ENCODE measurements at regions of chr14 and their contacts with region 1.

Region 1: DNA sequence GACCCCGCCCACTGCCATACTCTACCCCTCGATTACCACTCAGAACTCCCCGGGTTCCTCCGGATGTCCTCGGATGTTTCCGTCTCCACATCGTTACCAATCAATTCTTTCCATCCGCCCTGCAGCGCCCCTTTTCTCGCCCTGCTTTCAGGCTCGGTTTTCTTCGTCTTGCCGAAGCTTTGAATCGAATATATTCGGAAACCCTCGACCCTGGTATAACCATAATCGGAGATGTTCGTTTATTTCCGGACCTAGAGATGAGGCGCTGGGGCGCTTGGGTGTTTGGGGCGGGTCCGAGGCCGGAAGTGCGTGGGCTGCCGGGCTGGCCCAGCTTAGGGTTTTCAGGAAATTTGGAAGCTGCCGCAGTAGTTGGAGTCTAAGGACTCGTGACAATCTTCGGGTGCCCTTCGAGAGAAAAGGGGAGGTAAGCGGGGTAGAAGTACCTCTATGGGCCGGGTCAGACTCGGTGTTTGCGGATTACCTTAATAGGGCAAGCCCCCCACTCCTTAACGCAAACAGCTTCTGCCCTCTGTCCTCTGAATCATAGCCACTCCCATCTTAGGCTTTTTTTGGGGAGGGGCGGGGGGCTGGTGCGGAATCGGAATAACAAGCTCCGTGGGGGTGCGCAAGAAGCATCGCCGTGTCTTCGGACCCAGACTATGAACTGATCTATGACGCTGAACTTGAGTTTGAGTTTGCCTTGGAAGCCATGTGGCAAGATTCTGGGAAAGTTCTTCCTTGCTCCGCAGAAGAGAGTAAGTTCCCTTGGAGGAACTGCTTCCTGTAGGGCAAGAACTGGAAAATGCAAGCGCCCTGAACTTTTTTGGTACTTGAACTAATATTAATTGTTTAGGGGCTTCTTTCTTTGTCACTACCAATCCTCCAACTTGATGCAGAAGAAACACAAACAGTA is at the start of gene C14orf119:
- DNase-seq: peak; percentile 99
- H3K4me3 Mint-ChIP-seq: no peak within 1 kb of the TSS
- H3K27ac Mint-ChIP-seq: no peak within 1 kb of the TSS
- H3K4me1 Mint-ChIP-seq: peaks cover 15% of the 10 kb centered on the region
- H3K27me3 Mint-ChIP-seq: no peaks in the 10 kb centered on the region
- total RNA-seq, gene C14orf119: 49.7 and 55.6 TPM in 2 replicates

Region 2: GRCh38 chr14:21269252-21270046 is 1826.0 kb before region 1 on chr14 and contains the start of gene HNRNPC:
- intact Hi-C with region 1: loop called (anchors 2 kb)
- DNase-seq: peak; percentile 100
- H3K4me3 Mint-ChIP-seq: peak within 1 kb of the TSS; percentile 99
- H3K27ac Mint-ChIP-seq: peak within 1 kb of the TSS; percentile 100
- H3K4me1 Mint-ChIP-seq: peaks cover 34% of the 10 kb centered on the region
- H3K27me3 Mint-ChIP-seq: no peaks in the 10 kb centered on the region
- total RNA-seq, gene HNRNPC: 958 and 976 TPM in 2 replicates

Region 3: DNA sequence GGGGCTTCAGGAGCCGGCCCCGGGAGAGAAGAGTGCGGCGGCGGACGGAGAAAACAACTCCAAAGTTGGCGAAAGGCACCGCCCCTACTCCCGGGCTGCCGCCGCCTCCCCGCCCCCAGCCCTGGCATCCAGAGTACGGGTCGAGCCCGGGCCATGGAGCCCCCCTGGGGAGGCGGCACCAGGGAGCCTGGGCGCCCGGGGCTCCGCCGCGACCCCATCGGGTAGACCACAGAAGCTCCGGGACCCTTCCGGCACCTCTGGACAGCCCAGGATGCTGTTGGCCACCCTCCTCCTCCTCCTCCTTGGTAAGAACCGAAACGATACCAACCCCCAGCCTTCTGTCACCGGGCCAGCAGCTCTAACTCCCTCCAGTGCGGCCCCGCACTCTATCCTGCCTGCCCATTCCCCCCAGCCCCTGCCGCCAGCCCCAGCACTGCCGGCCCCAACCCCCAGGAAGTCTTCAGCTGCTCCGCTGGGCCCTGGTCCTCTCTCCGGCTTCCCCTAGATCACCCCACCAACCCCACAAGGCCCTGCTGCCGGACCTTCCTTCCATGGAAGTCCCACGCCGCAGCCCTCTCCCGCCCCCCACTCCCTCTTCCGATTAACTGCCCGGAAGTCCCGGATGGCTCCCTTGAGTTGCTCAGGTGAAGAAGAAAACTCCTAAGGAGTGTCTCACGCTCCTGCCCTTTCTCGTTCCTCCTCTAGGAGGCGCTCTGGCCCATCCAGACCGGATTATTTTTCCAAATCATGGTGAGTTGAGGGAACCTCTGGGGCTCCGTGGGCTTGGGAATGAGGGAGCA is 223.2 kb before region 1 on chr14:
- intact Hi-C with region 1: loop called (anchors 1 kb)
- DNase-seq: peak; percentile 63
- H3K4me3 Mint-ChIP-seq: peak overlapping the region; percentile 91
- H3K27ac Mint-ChIP-seq: peak overlapping the region; percentile 80
- H3K4me1 Mint-ChIP-seq: peaks cover 22% of the 10 kb centered on the region
- H3K27me3 Mint-ChIP-seq: no peaks in the 10 kb centered on the region

Region 4: DNA sequence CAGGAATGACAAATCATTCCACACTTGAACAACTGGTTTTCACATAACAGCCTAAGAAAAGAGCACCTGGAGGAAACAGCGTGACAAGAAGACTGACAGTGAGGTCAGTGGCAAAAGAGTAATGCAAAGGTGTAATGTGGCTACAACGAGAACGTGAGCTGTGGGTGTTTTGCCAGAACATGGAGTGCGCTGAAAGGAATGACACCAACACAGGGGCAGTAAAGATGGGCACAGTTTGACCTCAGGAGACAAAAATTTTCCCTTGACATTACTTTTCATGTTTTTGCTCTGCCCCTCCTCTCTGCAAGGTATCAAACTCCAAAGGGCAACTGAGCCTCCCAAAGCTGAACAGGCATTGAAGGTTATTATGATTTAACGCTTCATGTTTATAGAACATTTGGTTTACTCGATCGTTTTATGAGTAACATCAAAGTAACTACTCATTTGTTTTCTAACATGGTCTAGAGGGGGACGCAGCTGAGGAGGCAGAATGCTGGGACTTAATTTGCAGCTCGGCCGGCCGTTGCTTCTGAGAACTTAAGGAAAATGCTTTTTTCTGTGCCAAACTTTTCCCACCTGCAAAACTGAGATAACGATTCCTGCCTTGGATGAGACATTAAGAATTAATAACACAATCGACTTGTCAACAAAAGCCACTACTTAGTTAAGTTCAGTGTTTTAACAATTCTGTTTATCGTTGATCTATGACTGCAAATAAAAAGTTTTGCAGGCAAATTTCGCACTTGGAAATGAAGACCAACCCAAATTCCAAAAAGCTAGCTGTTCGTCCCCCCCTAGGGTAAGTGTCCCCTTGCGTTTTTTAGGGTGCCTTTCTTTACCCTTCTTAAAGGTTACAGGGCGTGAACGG is 139.5 kb before region 1 on chr14:
- intact Hi-C with region 1: loop called (anchors 1 kb)
- DNase-seq: no peak
- H3K4me3 Mint-ChIP-seq: peak overlapping the region; percentile 93
- H3K27ac Mint-ChIP-seq: peak overlapping the region; percentile 86
- H3K4me1 Mint-ChIP-seq: peaks cover 17% of the 10 kb centered on the region
- H3K27me3 Mint-ChIP-seq: peaks cover 3% of the 10 kb centered on the region

Region 5: GRCh38 chr14:23057757-23058653 is 37.4 kb before region 1 on chr14:
- intact Hi-C with region 1: loop called (anchors 1 kb)
- DNase-seq: peak; percentile 75
- H3K4me3 Mint-ChIP-seq: peak overlapping the region; percentile 86
- H3K27ac Mint-ChIP-seq: no peak overlapping the region
- H3K4me1 Mint-ChIP-seq: peaks cover 21% of the 10 kb centered on the region
- H3K27me3 Mint-ChIP-seq: peaks cover 8% of the 10 kb centered on the region

Region 6: DNA sequence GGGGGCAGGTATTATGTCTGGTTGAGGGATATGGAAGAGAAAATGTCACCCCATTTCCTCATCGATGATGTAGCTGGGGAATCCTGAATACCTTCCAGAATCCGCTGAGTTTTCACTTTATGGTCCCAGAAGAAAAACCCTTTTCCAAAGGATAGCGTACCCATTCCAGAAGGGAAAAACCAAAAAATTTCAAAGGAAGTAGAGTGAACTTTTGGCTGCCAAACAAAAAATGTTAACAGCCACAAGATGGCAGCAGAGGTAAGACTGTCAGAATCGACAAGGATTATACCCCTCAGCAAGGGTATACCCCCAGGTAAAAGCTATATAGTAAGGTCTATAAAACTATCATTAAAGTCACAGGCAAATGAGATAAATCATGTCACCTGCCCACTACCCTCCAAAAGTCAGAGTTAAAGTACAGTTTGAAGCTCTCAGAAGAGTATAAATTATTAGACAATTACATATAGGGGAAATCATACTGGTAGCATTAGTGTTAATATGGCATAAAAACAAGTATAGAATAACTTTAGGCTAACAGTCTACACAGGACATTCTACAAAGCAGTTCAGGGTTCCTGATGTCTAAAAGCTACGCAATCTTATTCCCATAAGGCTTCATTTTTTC is 18.6 kb before region 1 on chr14:
- intact Hi-C with region 1: no loop called
- DNase-seq: no peak
- H3K4me3 Mint-ChIP-seq: no peak overlapping the region
- H3K27ac Mint-ChIP-seq: no peak overlapping the region
- H3K4me1 Mint-ChIP-seq: peaks cover 11% of the 10 kb centered on the region
- H3K27me3 Mint-ChIP-seq: no peaks in the 10 kb centered on the region

Region 7: DNA sequence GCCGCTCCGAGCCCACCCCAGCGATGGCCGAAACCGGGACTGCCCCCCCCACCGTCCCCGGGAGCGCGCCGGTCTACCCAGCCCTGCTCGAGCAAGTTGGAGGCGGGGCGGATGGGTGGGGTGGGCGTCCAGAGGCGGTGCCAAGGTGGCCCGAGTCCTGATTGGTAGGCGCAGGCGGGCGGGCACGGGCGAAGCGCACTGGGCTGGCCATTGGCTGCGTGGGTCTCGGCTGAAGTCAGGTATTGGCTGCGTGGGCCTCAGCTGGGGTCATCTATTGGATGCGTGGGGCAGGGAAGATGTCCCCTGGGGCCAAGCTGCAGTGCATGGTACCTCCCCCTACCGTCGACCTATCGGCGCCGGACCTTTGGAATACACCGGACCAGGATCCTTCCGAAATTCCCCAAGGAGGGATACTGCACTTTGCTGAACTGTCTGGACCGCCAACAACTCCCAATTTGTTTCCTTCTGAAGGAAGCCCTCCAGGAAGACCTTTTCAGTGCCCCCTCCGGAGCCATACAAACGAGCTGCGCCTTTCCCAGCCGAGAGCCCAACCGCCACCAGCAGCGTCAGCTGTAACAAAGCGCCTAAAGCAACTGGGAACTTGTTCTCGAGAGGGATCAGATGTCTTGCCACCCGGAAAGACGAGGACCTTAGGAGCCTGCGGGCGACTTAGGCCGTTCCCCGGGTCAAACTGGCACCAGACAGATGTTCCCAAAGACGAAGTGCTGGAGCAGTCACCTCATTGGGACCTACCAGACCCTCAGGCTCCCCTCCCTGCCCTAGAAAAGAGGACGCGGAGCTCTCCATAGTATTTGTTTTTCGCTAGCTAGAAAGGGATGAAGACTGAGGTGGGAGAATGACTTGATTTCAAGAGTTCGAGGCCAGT is 190.8 kb after region 1 on chr14 and contains the start of gene HOMEZ:
- intact Hi-C with region 1: loop called (anchors 1 kb)
- DNase-seq: peak; percentile 98
- H3K4me3 Mint-ChIP-seq: peak within 1 kb of the TSS; percentile 99
- H3K27ac Mint-ChIP-seq: peak within 1 kb of the TSS; percentile 95
- H3K4me1 Mint-ChIP-seq: peaks cover 26% of the 10 kb centered on the region
- H3K27me3 Mint-ChIP-seq: no peaks in the 10 kb centered on the region
- total RNA-seq, gene HOMEZ: 10.9 and 12.2 TPM in 2 replicates

Region 8: GRCh38 chr14:23469127-23469905 is 373.9 kb after region 1 on chr14 and contains the start of gene NGDN:
- intact Hi-C with region 1: loop called (anchors 1 kb)
- DNase-seq: peak; percentile 89
- H3K4me3 Mint-ChIP-seq: no peak within 1 kb of the TSS
- H3K27ac Mint-ChIP-seq: peak within 1 kb of the TSS; percentile 45
- H3K4me1 Mint-ChIP-seq: peaks cover 11% of the 10 kb centered on the region
- H3K27me3 Mint-ChIP-seq: peaks cover 2% of the 10 kb centered on the region
- total RNA-seq, gene NGDN: 80.1 and 84.5 TPM in 2 replicates

Measured in activated T-helper 1 cell treated with anti-CD3 and anti-CD28 coated beads, Interleukin-12 subunit alpha, Interleukin-12 subunit beta, Interleukin-2, Interleukin-4 antibody, amounts not matched to agents 30 ng/mL and 10 ng/mL and 1 ng/mL, durations not matched to agents 14 hours and 24 hours and 36 hours (primary cell).